RWPE1 (cell line): ENCODE measurements at regions of chr6 and their contacts with region 1.

Region 1: DNA sequence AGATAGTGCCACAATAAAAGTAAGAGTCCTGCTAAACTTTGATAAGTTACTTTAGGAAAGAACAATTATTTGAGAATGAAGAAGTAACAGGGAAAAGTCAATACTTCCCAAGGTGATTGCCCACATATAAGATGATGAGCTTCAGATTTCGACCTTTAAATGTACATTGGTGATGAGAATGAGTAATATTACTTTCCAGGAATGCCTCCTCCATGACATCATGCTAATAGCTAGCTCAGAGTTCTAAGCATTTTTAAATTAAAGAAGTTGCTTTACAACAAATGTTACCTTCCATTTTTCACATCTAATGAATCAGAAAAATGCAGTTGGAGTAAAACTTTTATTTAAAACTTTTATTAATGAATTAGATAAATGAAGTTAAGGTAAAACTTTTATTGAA is 22.5 kb upstream of the OPN5 start:
- DNase-seq: peak; percentile 8
- H3K27ac ChIP-seq: no peak overlapping the region
- CTCF ChIP-seq: no peak

Region 2: GRCh38 chr6:45843848-45844521 is 1915.4 kb before region 1 on chr6:
- CTCF ChIA-PET with region 1: no interaction called
- POLR2A ChIA-PET with region 1: interaction called, 11 read pairs
- DNase-seq: no peak
- H3K27ac ChIP-seq: no peak overlapping the region
- CTCF ChIP-seq: no peak

Region 3: DNA sequence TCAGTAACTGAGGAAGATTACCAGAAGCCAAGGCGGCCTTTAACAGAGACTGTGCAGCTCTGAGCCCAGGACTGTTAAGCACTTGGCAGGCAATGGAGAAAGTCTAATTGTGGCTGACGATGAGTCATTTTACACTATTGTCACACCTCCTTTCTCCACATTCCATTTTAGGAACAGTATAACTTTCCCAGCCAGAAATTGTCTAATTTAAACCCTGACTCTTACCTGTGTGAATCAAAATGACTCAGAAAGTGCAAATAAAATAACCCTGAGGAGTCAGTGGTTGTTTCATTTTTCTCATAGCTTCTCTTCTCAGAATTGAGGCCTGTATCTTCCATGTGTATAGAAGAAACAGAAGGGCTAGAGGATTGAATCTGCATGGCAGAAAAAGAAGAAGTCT is 17.6 kb before region 1 on chr6:
- CTCF ChIA-PET with region 1: no interaction called
- POLR2A ChIA-PET with region 1: no interaction called
- DNase-seq: peak; percentile 82
- H3K27ac ChIP-seq: no peak overlapping the region
- CTCF ChIP-seq: no peak